ENCODE measurements at regions of chr1 and their contacts with region 1.

Region 1: DNA sequence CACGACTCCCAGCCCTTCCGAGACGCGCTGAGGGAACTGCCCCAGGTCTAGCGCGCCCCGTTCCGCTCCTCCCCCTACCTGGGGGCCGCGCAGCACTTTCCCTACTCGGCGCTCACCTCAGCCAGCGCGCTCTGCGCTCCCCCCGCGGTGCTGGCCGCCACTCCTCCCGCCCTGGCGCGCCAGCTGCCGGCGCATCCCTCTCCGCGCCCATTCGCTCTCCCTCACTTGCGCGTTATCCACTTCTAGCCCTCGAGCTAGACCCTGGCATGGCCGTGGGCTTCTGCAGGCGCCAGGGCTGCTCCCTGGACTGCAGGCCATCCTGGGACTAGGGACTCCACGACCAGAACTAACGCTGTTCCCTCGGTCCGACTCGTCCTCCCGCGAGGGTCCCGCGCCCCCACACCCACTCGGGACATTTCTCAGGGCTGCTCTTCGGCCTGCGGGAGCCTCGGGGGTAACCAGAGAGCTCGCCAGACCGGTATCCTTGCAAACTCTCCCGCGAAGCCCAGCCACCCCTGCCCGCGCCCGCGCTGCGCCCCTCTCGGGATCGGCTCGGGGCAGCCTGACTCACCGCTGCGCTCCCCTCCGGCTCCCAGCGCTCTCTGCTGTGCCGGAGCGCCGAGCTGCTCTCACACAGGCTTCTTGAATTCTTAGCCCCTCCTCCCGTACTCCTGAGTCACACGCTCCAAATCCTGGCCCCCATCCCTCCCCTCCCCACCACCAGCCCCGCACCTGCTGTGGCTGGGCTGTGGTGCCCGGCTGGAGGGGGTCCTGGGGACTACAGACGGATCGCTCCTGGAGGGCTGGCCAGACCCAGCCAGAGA is at the start of gene NGF:
- DNase-seq: peak; percentile 50
- H3K4me3 ChIP-seq: peak within 1 kb of the TSS; percentile 57 to 67
- H3K27ac ChIP-seq: peak within 1 kb of the TSS; percentile 50 to 78
- H3K4me1 ChIP-seq: peaks cover 19% of the 10 kb centered on the region
- H3K27me3 ChIP-seq: no peaks in the 10 kb centered on the region
- CTCF ChIP-seq: no peak
- POLR2A ChIP-seq: no peak
- total RNA-seq, gene NGF: 0.63 to 1.4 TPM

Region 2: GRCh38 chr1:115282807-115283208 is 55.0 kb before region 1 on chr1:
- intact Hi-C with region 1: loop called (anchors 5 kb)
- DNase-seq: peak; percentile 86
- H3K4me3 ChIP-seq: peak overlapping the region in 1 of 2 donors; percentile 47
- H3K27ac ChIP-seq: peak overlapping the region; percentile 84 to 93
- H3K4me1 ChIP-seq: peaks cover 32% of the 10 kb centered on the region
- H3K27me3 ChIP-seq: no peaks in the 10 kb centered on the region
- CTCF ChIP-seq: no peak
- POLR2A ChIP-seq: no peak

Region 3: GRCh38 chr1:115402753-115403184 is 64.9 kb after region 1 on chr1:
- intact Hi-C with region 1: no loop called
- DNase-seq: no peak
- H3K4me3 ChIP-seq: no peak overlapping the region
- H3K27ac ChIP-seq: no peak overlapping the region
- H3K4me1 ChIP-seq: no peaks in the 10 kb centered on the region
- H3K27me3 ChIP-seq: no peaks in the 10 kb centered on the region
- CTCF ChIP-seq: no peak
- POLR2A ChIP-seq: no peak

Measured in testis (tissue), 5 donors.